Endothelial cell of umbilical vein (primary cell): ENCODE measurements at regions of chr1 and their contacts with region 1.

Region 1: GRCh38 chr1:207084701-207085180 is 3.9 kb upstream of the C4BPB start:
- DNase-seq: peak; percentile 75
- H3K4me3 ChIP-seq: no peak overlapping the region
- H3K27ac ChIP-seq: no peak overlapping the region
- H3K4me1 ChIP-seq: no peaks in the 10 kb centered on the region
- H3K27me3 ChIP-seq: peaks cover 2 to 3% of the 10 kb centered on the region in 2 experiments
- CTCF ChIP-seq: peak; percentile 39 to 63
- POLR2A ChIP-seq: no peak

Region 2: GRCh38 chr1:207097871-207098324 is 13.2 kb after region 1 on chr1:
- CTCF ChIA-PET with region 1: interaction called, 15 read pairs
- POLR2A ChIA-PET with region 1: no interaction called
- dilution Hi-C with region 1: no loop called
- intact Hi-C with region 1: no loop called
- DNase-seq: no peak
- H3K4me3 ChIP-seq: no peak overlapping the region
- H3K27ac ChIP-seq: no peak overlapping the region
- H3K4me1 ChIP-seq: no peaks in the 10 kb centered on the region
- H3K27me3 ChIP-seq: peaks cover 3% of the 10 kb centered on the region in 2 experiments
- CTCF ChIP-seq: no peak
- POLR2A ChIP-seq: no peak